PC-3 (cell line): ENCODE measurements at regions of chr22 and their contacts with region 1.

Region 1: DNA sequence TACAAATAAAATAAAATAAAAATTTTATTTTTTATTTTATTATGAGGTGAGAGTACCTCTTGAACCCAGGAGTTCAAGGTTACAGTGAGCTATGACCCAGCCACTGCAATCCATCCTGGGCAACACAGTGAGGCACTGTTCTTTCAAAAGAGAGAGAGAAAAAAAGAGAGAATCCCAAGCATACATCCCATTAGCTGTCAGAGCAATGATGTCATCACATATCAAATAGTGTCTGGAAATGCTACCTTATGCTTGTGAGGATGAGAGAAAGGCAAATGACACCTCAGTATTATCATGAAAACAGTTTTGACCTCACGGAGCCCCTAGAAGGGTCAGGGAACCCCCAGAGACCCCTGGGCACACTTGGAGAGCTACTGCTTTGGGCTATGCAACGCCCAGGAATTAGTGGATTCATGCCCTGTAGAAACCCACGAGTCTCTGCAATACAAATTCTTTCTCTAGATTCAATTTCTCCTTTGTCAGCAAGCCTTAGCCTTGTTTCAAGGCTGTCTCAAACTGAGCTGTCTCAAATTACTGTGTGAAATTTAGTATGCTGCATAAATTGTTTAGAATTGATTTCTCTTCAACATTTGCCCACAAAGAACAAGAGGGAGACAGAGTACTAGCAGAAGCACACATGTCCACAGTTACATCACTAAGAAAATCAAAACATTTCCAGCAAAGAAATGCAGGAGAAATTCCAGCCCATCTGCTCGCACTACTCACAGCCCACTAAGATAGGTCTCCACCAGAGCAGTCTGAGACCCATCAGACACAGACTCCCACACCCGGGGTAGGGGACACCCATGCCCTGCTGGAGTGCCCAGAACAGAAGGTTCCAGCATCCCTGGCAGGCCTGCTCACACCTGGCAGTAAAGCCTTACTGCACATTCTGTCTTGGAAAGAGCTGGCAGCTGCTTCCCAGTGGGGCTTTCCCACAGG is 18.1 kb downstream of the DGCR2 start:
- DNase-seq: no peak
- ATAC-seq: no peak
- H3K4me3 ChIP-seq: no peak overlapping the region
- H3K27ac ChIP-seq: no peak overlapping the region
- H3K4me1 ChIP-seq: no peaks in the 10 kb centered on the region
- H3K27me3 ChIP-seq: no peaks in the 10 kb centered on the region
- CTCF ChIP-seq: no peak

Region 2: GRCh38 chr22:19607192-19608002 is 503.2 kb after region 1 on chr22:
- CTCF ChIA-PET with region 1: interaction called, 13 read pairs
- POLR2A ChIA-PET with region 1: no interaction called
- intact Hi-C with region 1: no loop called
- DNase-seq: peak; percentile 78
- ATAC-seq: peak; percentile 93
- H3K4me3 ChIP-seq: peak overlapping the region; percentile 45
- H3K27ac ChIP-seq: peak overlapping the region; percentile 81
- H3K4me1 ChIP-seq: peaks cover 30% of the 10 kb centered on the region
- H3K27me3 ChIP-seq: no peaks in the 10 kb centered on the region
- CTCF ChIP-seq: no peak